Activated T-helper 2 cell treated with anti-CD3 and anti-CD28 coated beads, Interferon-gamma antibody, Interleukin-2, Interleukin-4, amounts not matched to agents 10 μg/mL and 5 μg/mL and 100 μg/mL, durations not matched to agents 14 hours and 24 hours and 36 hours (primary cell): ENCODE measurements at regions of chr21 and their contacts with region 1.

Region 1: DNA sequence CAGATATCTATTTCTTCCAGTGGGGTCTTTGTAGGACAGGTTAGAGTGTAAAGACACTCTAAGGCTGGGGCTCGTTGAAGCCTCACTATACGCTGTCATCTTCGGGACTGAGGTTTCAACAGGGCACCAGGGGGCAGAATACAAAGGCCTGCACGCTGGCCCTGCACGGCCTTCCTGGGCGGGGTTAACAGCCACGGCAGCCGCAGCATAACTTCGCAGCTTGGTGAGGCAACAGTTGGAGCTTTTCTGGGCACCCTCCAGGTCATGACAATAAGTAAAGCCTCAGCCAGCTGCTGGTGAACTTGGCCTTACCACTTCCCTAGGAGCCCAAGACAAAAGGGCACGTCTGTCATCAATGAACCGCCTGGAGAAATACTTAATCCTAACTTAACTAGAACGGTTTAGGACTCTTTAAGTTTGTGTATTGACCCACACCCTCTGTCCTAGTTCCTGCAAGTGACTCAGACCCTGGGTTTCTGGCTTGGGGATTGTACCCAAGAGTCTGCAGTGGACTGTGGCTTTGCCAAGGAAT is 2.3 kb upstream of the RUNX1 start:
- DNase-seq: peak; percentile 81
- H3K4me3 Mint-ChIP-seq: peak overlapping the region; percentile 49
- H3K27ac Mint-ChIP-seq: peak overlapping the region; percentile 96
- H3K4me1 Mint-ChIP-seq: peaks cover 47% of the 10 kb centered on the region
- H3K27me3 Mint-ChIP-seq: no peaks in the 10 kb centered on the region

Region 2: DNA sequence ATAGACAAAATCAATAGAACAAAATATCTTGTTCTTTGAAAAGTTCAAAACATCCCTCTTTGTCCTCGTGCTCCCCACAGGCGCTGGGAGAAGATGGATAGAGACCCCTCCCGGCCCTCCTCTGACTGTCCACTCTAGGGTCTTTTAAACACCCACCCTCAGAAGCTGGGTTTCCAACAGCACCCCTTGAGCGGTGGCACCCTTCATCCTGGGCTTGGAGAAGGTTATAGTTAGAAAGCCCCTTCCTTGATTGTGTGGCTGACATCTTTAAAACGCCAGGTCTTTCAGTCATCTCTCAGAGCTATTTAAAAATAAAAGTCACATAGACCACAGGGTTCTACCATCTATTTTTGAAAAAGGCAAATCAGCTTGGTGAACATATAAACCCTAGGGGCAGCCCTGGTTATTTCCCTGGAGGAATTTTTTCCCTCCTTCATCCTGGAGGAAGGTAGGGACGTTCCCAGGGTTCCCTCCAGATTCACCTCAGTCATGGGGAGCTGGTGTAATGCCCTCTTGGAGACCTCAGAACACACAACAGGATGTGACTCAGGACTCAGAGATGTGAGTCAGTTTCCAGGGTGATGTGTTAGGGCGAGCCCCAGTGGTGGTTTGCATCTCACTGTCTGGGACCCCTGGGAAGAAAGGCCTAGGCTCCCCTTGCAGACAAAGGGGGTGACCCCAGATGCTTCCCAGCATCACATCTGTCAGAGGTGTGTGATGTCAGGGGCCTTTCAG is 244.0 kb before region 1 on chr21:
- intact Hi-C with region 1: loop called (anchors 5 kb)
- DNase-seq: peak; percentile 44
- H3K4me3 Mint-ChIP-seq: no peak overlapping the region
- H3K27ac Mint-ChIP-seq: peak overlapping the region; percentile 89
- H3K4me1 Mint-ChIP-seq: peaks cover 83% of the 10 kb centered on the region
- H3K27me3 Mint-ChIP-seq: no peaks in the 10 kb centered on the region

Region 3: GRCh38 chr21:34946916-34947534 is 104.3 kb before region 1 on chr21:
- intact Hi-C with region 1: loop called (anchors 1 kb)
- DNase-seq: no peak
- H3K4me3 Mint-ChIP-seq: no peak overlapping the region
- H3K27ac Mint-ChIP-seq: peak overlapping the region; percentile 83
- H3K4me1 Mint-ChIP-seq: peaks cover 80% of the 10 kb centered on the region
- H3K27me3 Mint-ChIP-seq: no peaks in the 10 kb centered on the region

Region 4: GRCh38 chr21:35088319-35088771 is 37.0 kb after region 1 on chr21:
- intact Hi-C with region 1: loop called (anchors 1 kb)
- DNase-seq: no peak
- H3K4me3 Mint-ChIP-seq: no peak overlapping the region
- H3K27ac Mint-ChIP-seq: peak overlapping the region; percentile 85
- H3K4me1 Mint-ChIP-seq: peaks cover 52% of the 10 kb centered on the region
- H3K27me3 Mint-ChIP-seq: no peaks in the 10 kb centered on the region

Region 5: DNA sequence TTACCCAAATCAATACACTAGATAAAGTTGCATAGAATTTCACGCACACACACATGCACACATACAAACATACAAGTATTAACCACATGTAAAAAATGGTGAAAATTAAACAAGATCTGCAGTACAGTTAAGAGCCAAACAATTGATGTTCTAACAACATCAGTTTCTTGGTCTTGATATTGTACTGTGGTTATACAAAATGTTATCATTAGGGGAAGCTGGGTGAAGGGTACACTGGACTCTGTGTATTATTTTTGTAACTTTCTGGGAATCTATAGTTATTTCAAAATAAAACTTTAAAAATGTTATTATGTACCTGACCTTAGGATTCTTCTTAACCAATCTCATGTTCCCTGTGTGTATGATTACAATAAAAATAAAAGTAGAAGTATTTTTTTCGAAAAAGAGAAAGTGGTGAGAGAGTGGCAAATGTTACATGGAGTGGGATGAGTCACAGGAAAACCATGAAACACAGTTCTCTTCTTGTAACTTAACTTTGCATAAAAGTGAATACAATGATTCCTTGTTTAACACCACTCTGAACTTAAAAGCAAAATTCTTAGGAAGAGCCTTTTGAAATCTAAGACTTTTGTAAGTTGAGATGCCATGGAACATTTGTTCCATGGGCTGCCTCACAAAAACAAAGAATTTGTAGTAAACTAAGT is 99.3 kb after region 1 on chr21:
- intact Hi-C with region 1: loop called (anchors 2 kb)
- DNase-seq: no peak
- H3K4me3 Mint-ChIP-seq: no peak overlapping the region
- H3K27ac Mint-ChIP-seq: peak overlapping the region; percentile 88
- H3K4me1 Mint-ChIP-seq: peaks cover 52% of the 10 kb centered on the region
- H3K27me3 Mint-ChIP-seq: no peaks in the 10 kb centered on the region

Region 6: GRCh38 chr21:35172231-35172630 is 120.9 kb after region 1 on chr21:
- intact Hi-C with region 1: no loop called
- DNase-seq: no peak
- H3K4me3 Mint-ChIP-seq: no peak overlapping the region
- H3K27ac Mint-ChIP-seq: peak overlapping the region; percentile 30
- H3K4me1 Mint-ChIP-seq: peaks cover 32% of the 10 kb centered on the region
- H3K27me3 Mint-ChIP-seq: no peaks in the 10 kb centered on the region

Region 7: DNA sequence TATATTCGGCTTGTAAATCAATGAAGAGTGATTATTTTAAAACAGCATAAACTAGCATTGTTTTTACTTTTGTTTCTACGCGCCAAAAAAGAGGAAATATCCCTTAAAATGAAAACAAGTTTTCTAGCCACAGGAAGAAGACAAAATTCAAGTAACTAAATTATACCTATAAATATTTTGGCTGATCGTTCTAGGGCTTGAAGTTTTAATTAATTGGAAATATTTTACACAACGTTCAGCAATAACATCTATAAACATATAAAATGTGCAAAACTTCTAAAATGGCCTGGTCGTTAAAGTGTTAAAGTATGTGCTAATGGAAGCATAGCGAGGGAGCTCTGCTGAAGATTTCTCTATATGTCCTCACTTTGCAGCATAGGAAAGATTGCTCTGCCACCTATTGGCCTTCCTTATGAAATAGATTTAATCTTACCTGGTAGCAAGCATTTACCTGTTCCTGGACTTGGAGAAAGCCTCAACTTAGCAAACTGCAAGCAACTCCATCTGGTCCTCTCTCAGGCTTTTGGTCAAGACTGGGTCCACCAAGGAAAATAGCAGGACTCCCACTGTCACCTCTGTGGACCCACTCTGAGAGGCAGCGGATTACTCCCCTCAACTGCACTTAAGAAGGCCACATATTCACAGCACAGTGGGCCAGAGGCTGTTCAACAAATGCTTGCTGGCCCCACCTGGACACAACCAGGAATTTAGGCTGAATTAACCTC is 349.0 kb after region 1 on chr21:
- intact Hi-C with region 1: loop called (anchors 1 kb)
- DNase-seq: peak; percentile 20
- H3K4me3 Mint-ChIP-seq: peak overlapping the region; percentile 15
- H3K27ac Mint-ChIP-seq: peak overlapping the region; percentile 48
- H3K4me1 Mint-ChIP-seq: peaks cover 26% of the 10 kb centered on the region
- H3K27me3 Mint-ChIP-seq: no peaks in the 10 kb centered on the region